Sigmoid colon (tissue), 7 donors: ENCODE measurements at regions of chr3 and their contacts with region 1.

Region 1: GRCh38 chr3:148604270-148605085 is 93.2 kb upstream of the AGTR1 start:
- DNase-seq: peak; percentile 65
- H3K4me3 ChIP-seq: no peak overlapping the region
- H3K27ac ChIP-seq: peak overlapping the region; percentile 35 to 89 (median 76)
- H3K4me1 ChIP-seq: peaks cover 0 to 58% (median 36%) of the 10 kb centered on the region in 4 donors
- H3K27me3 ChIP-seq: no peaks in the 10 kb centered on the region
- CTCF ChIP-seq: no peak
- EP300 ChIP-seq: no peak
- POLR2A ChIP-seq: no peak

Region 2: GRCh38 chr3:148466143-148466542 is 138.3 kb before region 1 on chr3:
- intact Hi-C with region 1: no loop called
- DNase-seq: no peak
- H3K4me3 ChIP-seq: no peak overlapping the region
- H3K27ac ChIP-seq: no peak overlapping the region
- H3K4me1 ChIP-seq: peaks cover 0 to 42% (median 20%) of the 10 kb centered on the region in 4 donors
- H3K27me3 ChIP-seq: no peaks in the 10 kb centered on the region
- CTCF ChIP-seq: no peak
- EP300 ChIP-seq: no peak
- POLR2A ChIP-seq: no peak

Region 3: GRCh38 chr3:148657470-148657869 is 53.0 kb after region 1 on chr3:
- intact Hi-C with region 1: no loop called
- DNase-seq: no peak
- H3K4me3 ChIP-seq: no peak overlapping the region
- H3K27ac ChIP-seq: no peak overlapping the region
- H3K4me1 ChIP-seq: peaks cover 0 to 5% (median 2%) of the 10 kb centered on the region in 4 donors
- H3K27me3 ChIP-seq: no peaks in the 10 kb centered on the region
- CTCF ChIP-seq: no peak
- EP300 ChIP-seq: no peak
- POLR2A ChIP-seq: no peak

Region 4: DNA sequence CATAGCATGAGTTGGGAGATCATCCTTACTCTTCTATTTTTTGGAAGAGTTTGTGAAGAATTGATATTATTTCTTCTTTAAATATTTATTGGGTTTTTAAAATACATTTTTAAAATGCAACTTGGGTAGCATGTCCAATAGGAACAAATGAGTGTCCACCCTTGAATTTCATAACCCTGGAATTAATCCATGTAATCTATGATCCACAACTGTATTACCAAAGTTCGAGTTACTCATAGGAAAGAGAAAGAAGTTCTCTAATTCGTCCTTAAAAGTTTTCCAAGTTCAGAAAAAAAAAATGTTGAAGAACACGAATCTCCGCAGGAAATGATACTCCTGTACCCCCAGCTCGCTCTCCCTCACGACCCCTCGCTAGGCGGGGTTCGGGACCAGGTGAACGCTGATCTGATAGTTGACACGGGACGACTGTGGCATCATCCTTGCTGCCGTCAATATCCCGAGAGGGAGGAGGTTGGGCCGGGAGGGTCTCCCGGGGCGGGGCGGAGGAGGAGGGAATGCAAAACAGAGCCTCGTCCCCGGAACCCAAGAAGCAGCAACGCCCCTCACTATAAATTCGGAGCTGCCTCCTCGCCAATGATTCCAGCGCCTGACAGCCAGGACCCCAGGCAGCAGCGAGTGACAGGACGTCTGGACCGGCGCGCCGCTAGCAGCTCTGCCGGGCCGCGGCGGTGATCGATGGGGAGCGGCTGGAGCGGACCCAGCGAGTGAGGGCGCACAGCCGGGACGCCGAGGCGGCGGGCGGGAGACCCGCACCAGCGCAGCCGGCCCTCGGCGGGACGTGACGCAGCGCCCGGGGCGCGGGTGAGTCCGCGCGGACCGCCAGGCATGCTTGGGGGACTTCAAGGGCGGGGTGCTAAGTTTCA is 93.1 kb after region 1 on chr3 and contains the start of gene AGTR1:
- intact Hi-C with region 1: loop called (anchors 5 kb)
- DNase-seq: peak; percentile 91
- H3K4me3 ChIP-seq: peak within 1 kb of the TSS; percentile 61 to 68 (median 66)
- H3K27ac ChIP-seq: peak within 1 kb of the TSS; percentile 57 to 85 (median 74)
- H3K4me1 ChIP-seq: peaks cover 0 to 23% (median 8%) of the 10 kb centered on the region in 4 donors
- H3K27me3 ChIP-seq: no peaks in the 10 kb centered on the region
- CTCF ChIP-seq: no peak
- EP300 ChIP-seq: no peak
- POLR2A ChIP-seq: peak in 1 of 2 donors; percentile 14
- total RNA-seq, gene AGTR1: 38.4 to 77.8 (median 51.6) TPM